B cell (primary cell): ENCODE measurements at regions of chr11 and their contacts with region 1.

Region 1: GRCh38 chr11:104843150-104843836 is 55.0 kb downstream of the CASP12 start:
- DNase-seq: no peak
- ATAC-seq: no peak
- H3K4me3 ChIP-seq: no peak overlapping the region
- H3K4me3 Mint-ChIP-seq: peak overlapping the region; percentile 13
- H3K27ac ChIP-seq: no peak overlapping the region
- H3K27ac Mint-ChIP-seq: no peak overlapping the region
- H3K4me1 ChIP-seq: peaks cover 10 to 16% of the 10 kb centered on the region in 2 donors
- H3K4me1 Mint-ChIP-seq: peaks cover 24% of the 10 kb centered on the region
- H3K27me3 ChIP-seq: no peaks in the 10 kb centered on the region
- H3K27me3 Mint-ChIP-seq: no peaks in the 10 kb centered on the region
- CTCF ChIP-seq: no peak

Region 2: DNA sequence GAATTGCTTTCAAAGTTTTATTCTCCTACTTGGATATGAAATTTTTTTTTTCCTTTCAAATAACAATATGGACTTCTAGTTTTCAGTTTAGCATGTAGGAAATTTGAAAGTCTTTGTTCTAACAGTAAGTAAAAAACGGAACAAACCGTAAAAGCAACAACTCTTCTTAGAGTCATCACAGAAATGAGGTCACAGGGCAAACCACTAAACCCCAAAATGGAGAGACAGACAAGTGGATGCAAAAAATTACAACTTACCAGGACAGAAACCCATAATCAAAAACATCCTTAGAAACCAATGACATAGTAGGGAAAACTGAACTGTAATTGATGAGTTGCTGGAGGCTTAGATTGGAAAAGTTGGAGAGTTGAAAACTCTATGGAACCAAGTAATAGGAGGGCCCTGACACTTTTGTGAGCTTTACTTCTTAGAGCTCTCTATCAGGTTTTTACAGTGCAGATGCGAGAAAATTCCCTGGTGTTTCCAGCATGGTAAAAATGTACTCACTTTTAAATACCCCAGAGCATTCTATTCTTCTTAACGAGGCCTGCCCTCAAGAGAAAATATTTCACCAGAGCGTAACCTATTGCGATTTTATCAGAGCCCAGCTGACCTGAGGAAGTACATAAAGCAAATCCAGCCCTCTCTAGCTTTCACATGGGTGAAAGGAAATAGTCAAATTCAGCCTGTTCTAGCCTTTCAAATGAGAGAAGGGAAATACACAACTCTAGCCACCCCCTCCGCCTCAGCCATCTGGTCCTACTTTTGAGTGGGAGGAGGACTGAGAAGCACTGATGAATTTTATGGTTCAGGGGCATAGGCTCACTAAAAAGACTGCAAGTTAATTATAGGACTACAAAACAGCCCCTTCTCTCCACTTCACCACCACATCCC is 15.8 kb after region 1 on chr11:
- CTCF ChIA-PET with region 1: no interaction called
- POLR2A ChIA-PET with region 1: no interaction called
- intact Hi-C with region 1: loop called (anchors 2 kb)
- DNase-seq: peak; percentile 66
- ATAC-seq: peak; percentile 88
- H3K4me3 ChIP-seq: peak overlapping the region in 3 of 5 experiments; percentile 15 to 46 (median 38)
- H3K4me3 Mint-ChIP-seq: peak overlapping the region; percentile 79
- H3K27ac ChIP-seq: peak overlapping the region; percentile 72 to 89
- H3K27ac Mint-ChIP-seq: peak overlapping the region; percentile 91
- H3K4me1 ChIP-seq: peaks cover 18 to 27% of the 10 kb centered on the region in 2 donors
- H3K4me1 Mint-ChIP-seq: peaks cover 34% of the 10 kb centered on the region
- H3K27me3 ChIP-seq: no peaks in the 10 kb centered on the region
- H3K27me3 Mint-ChIP-seq: no peaks in the 10 kb centered on the region
- CTCF ChIP-seq: no peak

Region 3: DNA sequence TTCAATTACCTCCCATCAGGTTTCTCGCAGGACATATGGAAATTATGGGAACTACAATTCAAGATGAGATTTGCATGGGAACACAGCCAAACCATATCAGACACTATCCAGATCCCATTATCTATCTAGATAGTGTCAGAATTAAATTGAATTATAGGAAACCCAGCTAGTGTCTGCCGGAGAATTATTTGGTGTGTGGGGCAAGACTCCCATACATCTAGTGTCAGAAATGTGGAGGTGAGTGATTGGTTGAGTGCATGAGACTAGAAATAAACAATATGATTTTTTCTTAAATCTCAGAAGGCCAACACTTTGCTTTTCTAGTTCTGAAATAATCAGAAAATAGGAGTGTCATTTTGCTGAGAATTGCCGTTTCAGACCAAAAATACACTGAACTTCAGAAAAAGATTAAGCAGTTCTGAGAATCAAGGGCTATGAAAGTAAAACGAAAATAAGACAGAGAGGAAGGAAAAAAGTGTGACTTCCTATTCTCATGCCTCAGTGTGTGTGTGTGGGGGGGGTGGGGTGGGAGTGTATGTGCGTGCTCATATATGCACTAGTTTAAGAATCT is 33.7 kb after region 1 on chr11:
- CTCF ChIA-PET with region 1: no interaction called
- POLR2A ChIA-PET with region 1: no interaction called
- intact Hi-C with region 1: loop called (anchors 5 kb)
- DNase-seq: peak; percentile 66
- ATAC-seq: peak; percentile 77
- H3K4me3 ChIP-seq: peak overlapping the region; percentile 9 to 64 (median 24)
- H3K4me3 Mint-ChIP-seq: peak overlapping the region; percentile 68
- H3K27ac ChIP-seq: peak overlapping the region; percentile 78 to 82
- H3K27ac Mint-ChIP-seq: peak overlapping the region; percentile 82
- H3K4me1 ChIP-seq: peaks cover 34 to 36% of the 10 kb centered on the region in 2 donors
- H3K4me1 Mint-ChIP-seq: peaks cover 61% of the 10 kb centered on the region
- H3K27me3 ChIP-seq: no peaks in the 10 kb centered on the region
- H3K27me3 Mint-ChIP-seq: no peaks in the 10 kb centered on the region
- CTCF ChIP-seq: no peak

Region 4: GRCh38 chr11:104934594-104934993 is 91.3 kb after region 1 on chr11:
- CTCF ChIA-PET with region 1: no interaction called
- POLR2A ChIA-PET with region 1: no interaction called
- intact Hi-C with region 1: no loop called
- DNase-seq: peak; percentile 48
- ATAC-seq: no peak
- H3K4me3 ChIP-seq: peak overlapping the region in 3 of 5 experiments; percentile 13 to 55 (median 32)
- H3K4me3 Mint-ChIP-seq: peak overlapping the region; percentile 78
- H3K27ac ChIP-seq: peak overlapping the region; percentile 21 to 48
- H3K27ac Mint-ChIP-seq: peak overlapping the region; percentile 62
- H3K4me1 ChIP-seq: peaks cover 22 to 40% of the 10 kb centered on the region in 2 donors
- H3K4me1 Mint-ChIP-seq: peaks cover 71% of the 10 kb centered on the region
- H3K27me3 ChIP-seq: no peaks in the 10 kb centered on the region
- H3K27me3 Mint-ChIP-seq: no peaks in the 10 kb centered on the region
- CTCF ChIP-seq: no peak